Left ventricle myocardium superior (tissue), 1 donor: ENCODE measurements at regions of chr22 and their contacts with region 1.

Region 1: GRCh38 chr22:46309526-46310085 is 12.9 kb downstream of the GTSE1 start:
- DNase-seq: peak; percentile 70
- ATAC-seq: peak; percentile 90

Region 2: GRCh38 chr22:45903355-45904149 is 406.1 kb before region 1 on chr22:
- intact Hi-C with region 1: loop called (anchors 10 kb)
- DNase-seq: no peak
- ATAC-seq: peak; percentile 16

Region 3: GRCh38 chr22:45994491-45995404 is 314.9 kb before region 1 on chr22:
- intact Hi-C with region 1: loop called (anchors 10 kb)
- DNase-seq: peak; percentile 92
- ATAC-seq: peak; percentile 49

Region 4: GRCh38 chr22:46122511-46122971 is 187.1 kb before region 1 on chr22:
- intact Hi-C with region 1: loop called (anchors 5 kb)
- DNase-seq: peak; percentile 90
- ATAC-seq: peak; percentile 63